ENCODE measurements at regions of chr10 and their contacts with region 1.

Region 1: DNA sequence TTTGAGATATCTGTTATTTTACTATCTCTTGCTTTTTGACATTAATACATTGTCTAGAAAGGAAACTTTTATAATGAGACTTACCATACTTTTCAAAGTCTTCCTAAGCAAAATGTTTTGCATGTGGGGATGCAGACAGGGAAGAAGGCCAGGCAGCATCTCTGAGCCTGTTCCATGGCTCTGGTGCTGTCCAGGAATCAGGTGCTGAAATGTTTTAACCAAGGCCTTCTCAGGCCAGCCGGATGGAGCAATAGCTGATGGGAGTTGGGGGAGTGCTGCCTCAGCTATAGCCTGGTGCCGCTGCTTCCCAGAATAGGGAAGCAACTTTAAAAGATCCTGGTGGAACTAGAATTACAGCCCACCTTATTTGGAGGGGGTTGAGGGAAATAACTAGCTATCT is 38.5 kb downstream of the CRTAC1 start:
- DNase-seq: no peak
- ATAC-seq: no peak
- H3K4me3 ChIP-seq: no peak overlapping the region
- H3K27ac ChIP-seq: no peak overlapping the region
- H3K4me1 ChIP-seq: no peaks in the 10 kb centered on the region
- H3K27me3 ChIP-seq: peaks cover 68% of the 10 kb centered on the region
- CTCF ChIP-seq: no peak
- POLR2A ChIP-seq: no peak
- RAD21 ChIP-seq: no peak

Region 2: DNA sequence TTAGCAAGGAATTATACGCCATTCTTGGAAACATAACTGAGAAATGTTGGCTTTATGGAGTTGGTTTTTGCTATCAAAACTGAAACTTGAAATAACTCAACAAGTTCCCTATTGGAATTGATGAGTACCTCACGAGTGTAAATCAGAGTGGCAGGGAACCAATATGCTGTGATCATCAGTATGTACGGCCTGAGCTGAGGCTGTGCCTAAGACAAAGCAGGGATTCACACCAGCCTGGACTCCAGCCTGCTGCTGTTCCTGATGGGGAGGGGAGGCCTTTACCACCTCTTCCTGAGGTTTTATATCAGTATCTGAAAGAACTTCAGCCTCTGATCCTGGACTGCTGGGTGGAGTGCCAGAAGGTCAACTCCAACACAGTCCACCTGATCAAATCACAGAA is 14.2 kb before region 1 on chr10:
- CTCF ChIA-PET with region 1: no interaction called
- POLR2A ChIA-PET with region 1: no interaction called
- RAD21 ChIA-PET with region 1: no interaction called
- intact Hi-C with region 1: no loop called
- DNase-seq: no peak
- ATAC-seq: no peak
- H3K4me3 ChIP-seq: no peak overlapping the region
- H3K27ac ChIP-seq: no peak overlapping the region
- H3K4me1 ChIP-seq: no peaks in the 10 kb centered on the region
- H3K27me3 ChIP-seq: peaks cover 97% of the 10 kb centered on the region
- CTCF ChIP-seq: no peak
- POLR2A ChIP-seq: no peak
- RAD21 ChIP-seq: no peak

Region 3: GRCh38 chr10:98074315-98074911 is 82.5 kb after region 1 on chr10:
- CTCF ChIA-PET with region 1: no interaction called
- POLR2A ChIA-PET with region 1: no interaction called
- RAD21 ChIA-PET with region 1: no interaction called
- intact Hi-C with region 1: loop called (anchors 5 kb)
- DNase-seq: no peak
- ATAC-seq: no peak
- H3K4me3 ChIP-seq: no peak overlapping the region
- H3K27ac ChIP-seq: no peak overlapping the region
- H3K4me1 ChIP-seq: no peaks in the 10 kb centered on the region
- H3K27me3 ChIP-seq: peaks cover 63% of the 10 kb centered on the region
- CTCF ChIP-seq: no peak
- POLR2A ChIP-seq: no peak
- RAD21 ChIP-seq: no peak

Region 4: DNA sequence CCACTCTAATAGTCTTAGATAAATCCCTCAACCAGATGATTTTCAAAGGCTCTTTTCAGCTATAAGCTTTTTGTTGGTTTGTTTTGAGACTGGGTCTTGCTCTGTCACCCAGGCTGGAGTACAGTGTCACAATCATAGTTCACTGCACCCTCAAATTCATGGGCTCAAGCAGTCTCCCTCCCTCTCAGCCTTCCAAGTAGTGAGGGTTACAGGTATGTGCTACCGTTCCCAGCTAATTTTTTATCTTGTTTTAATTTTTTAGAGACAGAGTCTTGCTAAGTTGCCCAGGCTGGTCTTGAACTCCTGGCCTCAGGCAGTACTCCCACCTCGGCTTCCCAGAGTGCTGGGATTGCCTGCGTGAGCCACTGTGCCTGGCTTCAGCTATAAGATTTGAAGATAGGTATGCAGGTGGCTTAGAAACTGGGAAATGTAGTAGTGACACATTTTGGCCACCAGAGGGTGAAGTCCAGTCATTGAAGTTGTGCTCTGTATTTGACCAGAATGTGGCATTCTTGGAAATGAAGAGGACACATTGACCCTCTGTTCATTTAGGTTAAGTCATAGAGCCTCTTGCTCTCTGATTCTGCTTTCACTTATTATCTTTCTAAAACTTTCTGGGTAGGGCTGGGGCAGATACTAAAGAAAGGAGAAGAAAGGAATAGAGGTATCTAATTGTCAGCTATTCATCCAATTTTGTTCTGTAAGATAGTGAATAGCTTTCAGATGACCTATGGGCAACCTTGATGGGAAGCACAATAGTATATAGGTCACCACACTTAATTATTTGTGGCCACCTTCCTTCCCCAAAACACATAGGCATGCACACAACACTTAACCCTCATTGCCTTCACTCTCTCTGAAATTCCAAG is 178.6 kb after region 1 on chr10:
- CTCF ChIA-PET with region 1: no interaction called
- POLR2A ChIA-PET with region 1: no interaction called
- RAD21 ChIA-PET with region 1: no interaction called
- intact Hi-C with region 1: no loop called
- DNase-seq: peak; percentile 40
- ATAC-seq: peak; percentile 98
- H3K4me3 ChIP-seq: no peak overlapping the region
- H3K27ac ChIP-seq: no peak overlapping the region
- H3K4me1 ChIP-seq: no peaks in the 10 kb centered on the region
- H3K27me3 ChIP-seq: no peaks in the 10 kb centered on the region
- CTCF ChIP-seq: peak; percentile 56 to 76 (median 75); a peak in 5 of 6 replicates
- POLR2A ChIP-seq: no peak
- RAD21 ChIP-seq: peak; percentile 59